Mammary epithelial cell (primary cell): ENCODE measurements at regions of chr2 and their contacts with region 1.

Region 1: DNA sequence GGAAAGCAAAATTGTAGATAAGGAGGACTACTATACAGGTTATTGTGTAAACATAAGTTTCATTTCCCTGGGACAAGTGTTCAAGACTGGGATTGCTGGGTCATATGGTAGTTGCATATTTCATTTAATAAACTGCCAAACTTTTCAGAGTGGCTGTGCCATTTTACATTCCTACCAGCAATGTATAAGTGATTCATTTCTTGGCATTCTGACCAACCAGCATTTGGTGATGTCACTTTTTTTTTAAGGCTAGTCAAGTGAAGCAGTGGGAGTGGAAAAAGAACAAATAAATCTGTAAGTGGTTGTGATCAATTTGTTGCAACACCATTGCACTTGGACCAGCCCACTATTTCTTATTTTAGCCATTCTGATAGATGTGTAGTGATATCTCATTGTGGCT is 5.2 kb upstream of the CHCHD5 start:
- DNase-seq: peak; percentile 75
- H3K4me3 ChIP-seq: no peak overlapping the region
- H3K27ac ChIP-seq: no peak overlapping the region
- H3K4me1 ChIP-seq: peaks cover 17% of the 10 kb centered on the region
- H3K27me3 ChIP-seq: no peaks in the 10 kb centered on the region
- CTCF ChIP-seq: peak; percentile 7 to 22

Region 2: GRCh38 chr2:112542123-112542983 is 36.9 kb before region 1 on chr2 and contains the start of gene POLR1B:
- CTCF ChIA-PET with region 1: no interaction called
- dilution Hi-C with region 1: no loop called
- in situ Hi-C with region 1: no loop called
- intact Hi-C with region 1: loop called (anchors 5 kb)
- DNase-seq: peak; percentile 88
- H3K4me3 ChIP-seq: peak within 1 kb of the TSS; percentile 73 to 86 (median 78)
- H3K27ac ChIP-seq: peak within 1 kb of the TSS; percentile 71
- H3K4me1 ChIP-seq: peaks cover 18% of the 10 kb centered on the region
- H3K27me3 ChIP-seq: no peaks in the 10 kb centered on the region
- CTCF ChIP-seq: no peak
- total RNA-seq, gene POLR1B: 23.0 to 41.1 TPM

Region 3: DNA sequence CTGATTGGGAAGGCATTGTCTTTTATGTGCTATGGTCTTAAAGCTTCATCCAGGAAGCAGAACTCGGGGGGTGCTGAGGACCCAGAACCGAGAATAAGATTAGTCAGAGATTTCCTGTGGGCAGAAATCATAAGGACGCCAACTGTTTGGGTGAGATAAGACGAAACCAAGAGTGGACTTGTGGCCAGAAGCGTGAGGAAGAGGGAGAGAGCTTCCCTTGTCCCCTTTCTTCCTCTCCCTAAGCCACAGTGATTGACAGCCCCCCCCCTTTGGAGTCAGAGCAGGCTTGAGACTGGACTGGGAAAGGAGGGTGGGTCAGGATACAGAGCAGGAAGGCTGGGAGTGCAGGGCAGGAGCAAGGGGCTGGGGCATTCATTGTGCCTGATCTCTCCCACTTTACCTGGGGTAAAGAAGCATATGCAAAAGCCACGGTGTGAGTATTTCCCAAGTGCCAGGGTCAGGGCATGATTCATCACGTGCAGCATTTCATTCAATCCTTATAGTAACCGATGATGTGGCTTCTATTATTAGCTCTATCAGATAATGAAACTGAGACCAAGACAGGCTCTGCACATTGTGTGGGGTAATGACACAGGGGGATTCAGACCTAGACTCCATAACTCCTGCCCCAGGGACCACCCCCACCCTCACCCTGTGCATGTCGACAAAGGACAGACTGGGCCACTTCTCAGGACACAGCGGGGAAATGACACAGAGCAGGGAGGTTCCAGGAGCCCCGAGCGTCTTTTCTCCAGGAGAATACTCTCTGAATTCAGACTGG is 545.1 kb after region 1 on chr2:
- CTCF ChIA-PET with region 1: no interaction called
- dilution Hi-C with region 1: no loop called
- in situ Hi-C with region 1: no loop called
- intact Hi-C with region 1: no loop called
- DNase-seq: peak; percentile 64
- H3K4me3 ChIP-seq: no peak overlapping the region
- H3K27ac ChIP-seq: no peak overlapping the region
- H3K4me1 ChIP-seq: peaks cover 14% of the 10 kb centered on the region
- H3K27me3 ChIP-seq: no peaks in the 10 kb centered on the region
- CTCF ChIP-seq: no peak